CD4-positive, alpha-beta T cell (primary cell): ENCODE measurements at regions of chr12 and their contacts with region 1.

Region 1: GRCh38 chr12:92034858-92035401 is 110.7 kb downstream of the BTG1 start:
- DNase-seq: peak; percentile 26 to 84 (median 58)
- ATAC-seq: peak; percentile 53
- H3K4me3 ChIP-seq: peak overlapping the region; percentile 54
- H3K4me3 Mint-ChIP-seq: peak overlapping the region; percentile 89
- H3K27ac ChIP-seq: peak overlapping the region; percentile 66 to 67
- H3K27ac Mint-ChIP-seq: peak overlapping the region; percentile 96
- H3K4me1 ChIP-seq: peaks cover 79% of the 10 kb centered on the region
- H3K4me1 Mint-ChIP-seq: peaks cover 95% of the 10 kb centered on the region
- H3K27me3 ChIP-seq: no peaks in the 10 kb centered on the region
- H3K27me3 Mint-ChIP-seq: no peaks in the 10 kb centered on the region
- CTCF ChIP-seq: no peak

Region 2: GRCh38 chr12:91778938-91779400 is 256.0 kb before region 1 on chr12:
- CTCF ChIA-PET with region 1: no interaction called
- POLR2A ChIA-PET with region 1: interaction called, 11 read pairs
- intact Hi-C with region 1: no loop called
- DNase-seq: peak; percentile 3 to 75 (median 31)
- ATAC-seq: peak; percentile 75
- H3K4me3 ChIP-seq: peak overlapping the region; percentile 30
- H3K4me3 Mint-ChIP-seq: peak overlapping the region; percentile 78
- H3K27ac ChIP-seq: peak overlapping the region; percentile 67 to 72
- H3K27ac Mint-ChIP-seq: peak overlapping the region; percentile 87
- H3K4me1 ChIP-seq: peaks cover 5% of the 10 kb centered on the region
- H3K4me1 Mint-ChIP-seq: peaks cover 57% of the 10 kb centered on the region
- H3K27me3 ChIP-seq: no peaks in the 10 kb centered on the region
- H3K27me3 Mint-ChIP-seq: no peaks in the 10 kb centered on the region
- CTCF ChIP-seq: no peak

Region 3: DNA sequence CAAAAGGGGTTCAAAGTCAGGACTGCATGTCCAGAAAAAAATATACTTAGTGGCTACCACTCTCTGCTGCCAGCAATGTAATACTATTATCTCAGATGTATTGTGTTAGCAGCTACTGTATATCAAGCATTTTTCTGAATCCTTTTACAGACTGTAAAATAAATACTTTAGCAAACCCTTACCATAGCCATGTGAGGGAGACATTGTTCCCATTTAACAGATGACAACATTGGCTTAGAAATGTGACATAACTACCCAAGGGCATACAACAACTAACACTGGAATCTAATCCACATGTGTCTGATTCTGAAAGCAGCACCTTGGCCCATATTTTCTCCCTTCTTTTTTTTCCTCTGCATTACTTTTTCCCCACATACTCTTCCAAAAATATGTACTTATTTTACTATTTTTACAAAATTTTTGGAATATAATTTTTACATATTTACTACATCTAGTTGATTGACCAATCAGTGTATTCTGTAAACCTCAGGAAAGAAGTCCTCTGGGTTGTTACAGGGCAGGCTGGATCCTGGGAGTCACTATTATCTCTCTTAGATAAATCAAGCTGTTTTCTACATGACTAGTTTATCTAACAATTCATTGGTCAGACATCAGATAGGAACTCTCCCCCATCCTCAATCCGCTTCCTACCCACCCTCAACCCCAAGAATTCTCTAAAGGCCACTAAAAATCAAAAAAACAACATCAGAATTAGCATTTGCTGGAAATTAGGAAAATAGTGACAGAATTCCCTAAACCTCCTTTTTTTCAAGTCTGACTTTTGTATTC is 43.3 kb before region 1 on chr12:
- CTCF ChIA-PET with region 1: interaction called, 3 read pairs
- POLR2A ChIA-PET with region 1: interaction called, 20 read pairs
- intact Hi-C with region 1: loop called in 1 of 2 experiments (anchors 5 kb)
- DNase-seq: peak in 3 of 14 experiments; percentile 72 to 79 (median 76)
- ATAC-seq: peak; percentile 89
- H3K4me3 ChIP-seq: no peak overlapping the region
- H3K4me3 Mint-ChIP-seq: peak overlapping the region; percentile 6
- H3K27ac ChIP-seq: no peak overlapping the region
- H3K27ac Mint-ChIP-seq: peak overlapping the region; percentile 59
- H3K4me1 ChIP-seq: peaks cover 3% of the 10 kb centered on the region
- H3K4me1 Mint-ChIP-seq: peaks cover 75% of the 10 kb centered on the region
- H3K27me3 ChIP-seq: no peaks in the 10 kb centered on the region
- H3K27me3 Mint-ChIP-seq: no peaks in the 10 kb centered on the region
- CTCF ChIP-seq: peak; percentile 58

Region 4: GRCh38 chr12:92007787-92008186 is 27.1 kb before region 1 on chr12:
- CTCF ChIA-PET with region 1: interaction called, 3 read pairs
- POLR2A ChIA-PET with region 1: interaction called, 26 read pairs
- intact Hi-C with region 1: no loop called
- DNase-seq: peak in 2 of 14 experiments; percentile 32 to 34
- ATAC-seq: peak; percentile 35
- H3K4me3 ChIP-seq: no peak overlapping the region
- H3K4me3 Mint-ChIP-seq: no peak overlapping the region
- H3K27ac ChIP-seq: no peak overlapping the region
- H3K27ac Mint-ChIP-seq: peak overlapping the region; percentile 12
- H3K4me1 ChIP-seq: peaks cover 12% of the 10 kb centered on the region
- H3K4me1 Mint-ChIP-seq: peaks cover 91% of the 10 kb centered on the region
- H3K27me3 ChIP-seq: no peaks in the 10 kb centered on the region
- H3K27me3 Mint-ChIP-seq: no peaks in the 10 kb centered on the region
- CTCF ChIP-seq: no peak

Region 5: GRCh38 chr12:92059976-92060375 is 25.0 kb after region 1 on chr12:
- CTCF ChIA-PET with region 1: no interaction called
- POLR2A ChIA-PET with region 1: interaction called, 17 read pairs
- intact Hi-C with region 1: loop called in 1 of 2 experiments (anchors 2 kb)
- DNase-seq: no peak
- ATAC-seq: no peak
- H3K4me3 ChIP-seq: no peak overlapping the region
- H3K4me3 Mint-ChIP-seq: no peak overlapping the region
- H3K27ac ChIP-seq: no peak overlapping the region
- H3K27ac Mint-ChIP-seq: peak overlapping the region; percentile 90
- H3K4me1 ChIP-seq: peaks cover 27% of the 10 kb centered on the region
- H3K4me1 Mint-ChIP-seq: peaks cover 99% of the 10 kb centered on the region
- H3K27me3 ChIP-seq: no peaks in the 10 kb centered on the region
- H3K27me3 Mint-ChIP-seq: no peaks in the 10 kb centered on the region
- CTCF ChIP-seq: no peak

Region 6: DNA sequence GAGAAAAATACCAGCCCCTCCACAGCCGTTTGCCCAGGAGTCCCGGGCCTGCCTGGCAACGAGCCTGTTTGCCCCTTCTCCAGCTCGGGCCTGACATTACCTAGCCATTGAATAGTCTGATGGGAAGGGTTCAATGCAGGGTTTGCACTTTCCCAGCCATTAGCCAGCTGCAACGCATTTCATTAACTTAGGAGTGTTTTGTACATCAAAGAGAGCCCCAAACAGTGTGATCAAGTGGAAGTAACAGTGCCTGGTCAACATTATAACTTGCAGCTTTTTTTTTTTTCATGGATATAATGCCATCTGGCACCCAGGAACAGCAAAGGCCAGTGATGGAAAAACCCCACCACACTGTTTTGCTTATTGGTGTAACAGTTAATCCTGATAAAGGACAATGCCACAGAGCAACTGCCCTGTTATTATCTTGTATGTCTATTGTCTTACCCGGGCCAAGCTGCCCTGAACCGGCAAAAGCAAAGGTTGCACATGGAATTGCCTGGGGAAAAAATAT is 72.7 kb after region 1 on chr12:
- CTCF ChIA-PET with region 1: interaction called, 3 read pairs
- POLR2A ChIA-PET with region 1: interaction called, 13 read pairs
- intact Hi-C with region 1: no loop called
- DNase-seq: no peak
- ATAC-seq: no peak
- H3K4me3 ChIP-seq: no peak overlapping the region
- H3K4me3 Mint-ChIP-seq: peak overlapping the region; percentile 51
- H3K27ac ChIP-seq: no peak overlapping the region
- H3K27ac Mint-ChIP-seq: peak overlapping the region; percentile 42
- H3K4me1 ChIP-seq: peaks cover 27% of the 10 kb centered on the region
- H3K4me1 Mint-ChIP-seq: peaks cover 76% of the 10 kb centered on the region
- H3K27me3 ChIP-seq: no peaks in the 10 kb centered on the region
- H3K27me3 Mint-ChIP-seq: no peaks in the 10 kb centered on the region
- CTCF ChIP-seq: no peak